Activated B cell treated with CpG ODN at 0.5 μM for 24 hours (primary cell): ENCODE measurements at regions of chr9 and their contacts with region 1.

Region 1: DNA sequence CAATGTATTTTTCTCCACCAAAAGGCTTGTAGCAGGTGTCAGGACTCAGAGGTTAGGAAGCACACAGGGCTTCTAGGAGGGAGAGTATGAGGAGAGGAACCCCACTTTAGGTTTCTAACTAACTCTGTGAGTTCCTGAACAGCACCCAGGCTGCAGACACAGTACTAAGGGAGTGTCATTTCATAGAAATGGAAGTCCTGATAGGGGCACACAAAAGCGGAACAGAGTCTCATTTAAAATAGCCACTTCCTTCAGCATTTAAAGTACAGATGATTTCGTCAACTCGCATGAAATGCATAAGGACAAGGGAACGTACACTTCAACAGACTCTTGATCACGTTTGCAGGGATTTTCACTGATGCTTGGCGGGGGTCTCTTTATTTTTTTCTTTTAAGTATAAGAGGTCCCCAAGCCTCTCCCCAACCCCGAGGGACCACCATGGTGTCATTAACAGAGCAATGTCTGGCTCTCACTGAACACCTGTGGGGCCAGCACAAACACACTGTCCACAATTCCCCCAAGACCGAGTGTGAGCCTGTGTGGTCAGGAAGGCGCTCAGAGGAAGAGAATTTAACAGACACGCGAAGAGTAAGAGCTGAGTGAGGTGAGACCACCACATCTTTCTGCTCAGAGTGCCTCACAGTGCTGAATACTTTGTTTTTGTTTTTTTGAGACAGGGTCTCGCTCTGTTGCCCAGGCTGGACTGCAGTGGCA is 82.3 kb downstream of the SECISBP2 start:
- DNase-seq: peak; percentile 35
- ATAC-seq: peak; percentile 83
- H3K4me3 Mint-ChIP-seq: peak overlapping the region; percentile 68
- H3K27ac Mint-ChIP-seq: peak overlapping the region; percentile 90
- H3K4me1 Mint-ChIP-seq: peaks cover 62% of the 10 kb centered on the region
- H3K27me3 Mint-ChIP-seq: no peaks in the 10 kb centered on the region
- CTCF ChIP-seq: no peak

Region 2: GRCh38 chr9:88733651-88734421 is 666.7 kb before region 1 on chr9:
- CTCF ChIA-PET with region 1: no interaction called
- POLR2A ChIA-PET with region 1: no interaction called
- intact Hi-C with region 1: no loop called
- DNase-seq: no peak
- ATAC-seq: no peak
- H3K4me3 Mint-ChIP-seq: no peak overlapping the region
- H3K27ac Mint-ChIP-seq: no peak overlapping the region
- H3K4me1 Mint-ChIP-seq: no peaks in the 10 kb centered on the region
- H3K27me3 Mint-ChIP-seq: peaks cover 3% of the 10 kb centered on the region
- CTCF ChIP-seq: no peak

Region 3: DNA sequence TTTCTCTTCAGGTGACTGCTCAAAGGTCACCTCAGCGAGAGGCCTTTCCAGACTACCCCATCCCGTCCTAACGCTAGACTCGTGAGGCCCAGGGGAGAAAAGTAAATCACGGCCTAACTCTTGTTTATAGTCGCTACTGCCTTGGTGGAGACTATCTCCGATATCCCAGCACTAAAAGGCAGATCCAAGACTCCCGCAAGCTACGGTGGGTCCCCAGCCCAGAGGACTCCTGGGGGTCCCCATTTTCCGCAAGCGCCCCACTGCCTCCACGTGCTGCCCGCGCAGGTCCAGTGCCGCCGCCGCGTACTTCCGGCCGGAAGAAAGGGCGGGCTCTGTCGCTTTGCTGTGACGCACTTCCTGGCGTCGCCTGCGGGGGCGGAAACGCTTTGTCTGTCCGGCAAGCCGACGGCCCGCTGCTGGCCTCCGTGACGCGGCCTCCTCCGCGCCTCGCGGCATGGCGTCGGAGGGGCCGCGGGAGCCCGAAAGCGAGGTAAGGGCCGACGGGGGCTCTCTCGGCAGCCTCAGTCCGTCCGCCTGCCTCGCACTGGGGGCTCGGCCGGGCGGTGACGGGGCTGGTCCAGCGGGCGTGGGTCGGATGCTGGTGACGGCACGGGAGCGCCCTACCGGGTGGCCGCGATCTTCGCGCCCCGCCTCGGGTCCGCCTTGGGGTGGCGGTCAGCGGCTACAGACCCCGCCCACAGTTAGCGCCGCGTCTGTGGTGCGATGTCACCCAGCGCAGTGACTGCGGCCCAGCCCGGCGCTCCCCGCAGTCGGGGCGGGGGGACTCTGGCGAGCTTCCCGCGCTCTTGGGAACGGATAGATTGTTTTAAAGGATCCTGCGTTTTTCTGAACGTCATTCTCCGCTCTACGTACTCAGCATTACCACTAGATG is 82.2 kb before region 1 on chr9 and contains the start of gene SECISBP2:
- CTCF ChIA-PET with region 1: no interaction called
- POLR2A ChIA-PET with region 1: no interaction called
- intact Hi-C with region 1: loop called (anchors 1 kb)
- DNase-seq: peak; percentile 98
- ATAC-seq: peak; percentile 92
- H3K4me3 Mint-ChIP-seq: peak within 1 kb of the TSS; percentile 91
- H3K27ac Mint-ChIP-seq: peak within 1 kb of the TSS; percentile 98
- H3K4me1 Mint-ChIP-seq: peaks cover 62% of the 10 kb centered on the region
- H3K27me3 Mint-ChIP-seq: no peaks in the 10 kb centered on the region
- CTCF ChIP-seq: no peak
- total RNA-seq, gene SECISBP2: 81.5 and 97.1 TPM in 2 replicates

Region 4: DNA sequence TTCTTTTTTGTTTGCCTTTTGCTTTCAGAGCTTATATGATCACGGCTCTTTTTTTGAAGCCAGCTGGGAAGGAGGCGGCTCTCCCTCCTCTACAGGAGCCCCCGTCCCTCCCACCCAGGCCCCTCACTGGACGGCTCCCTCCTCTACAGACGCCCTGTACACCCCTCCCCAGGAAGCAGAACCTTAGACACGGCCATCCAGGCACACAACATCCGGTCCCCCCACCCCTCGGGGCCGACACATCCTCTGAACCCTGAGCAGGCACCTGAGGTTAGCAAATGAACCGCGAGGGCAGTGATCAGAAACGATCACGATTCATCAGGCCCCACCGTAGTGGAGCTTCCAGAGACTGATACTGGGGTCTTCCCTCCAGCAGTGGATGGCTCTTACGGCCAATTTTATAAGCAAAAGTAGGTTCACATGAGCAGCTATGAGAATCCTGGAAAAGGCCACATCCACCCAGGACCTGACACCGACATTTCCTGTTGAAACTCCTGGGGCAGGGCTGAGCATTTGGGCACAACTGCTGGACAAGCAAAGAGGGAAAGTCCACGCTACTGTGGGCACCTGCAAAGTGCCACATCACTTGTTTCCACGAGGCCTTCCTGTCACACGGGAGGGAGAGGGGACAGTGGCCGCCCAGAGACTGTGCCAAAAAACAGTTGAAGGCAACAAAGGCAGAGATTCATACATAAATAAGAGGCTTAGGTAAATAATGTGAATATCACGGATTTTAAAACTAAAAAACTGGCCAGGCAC is 18.5 kb after region 1 on chr9:
- CTCF ChIA-PET with region 1: interaction called, 3 read pairs
- POLR2A ChIA-PET with region 1: interaction called, 10 read pairs
- intact Hi-C with region 1: loop called (anchors 1 kb)
- DNase-seq: peak; percentile 53
- ATAC-seq: peak; percentile 83
- H3K4me3 Mint-ChIP-seq: peak overlapping the region; percentile 84
- H3K27ac Mint-ChIP-seq: peak overlapping the region; percentile 94
- H3K4me1 Mint-ChIP-seq: peaks cover 73% of the 10 kb centered on the region
- H3K27me3 Mint-ChIP-seq: no peaks in the 10 kb centered on the region
- CTCF ChIP-seq: no peak

Region 5: GRCh38 chr9:89497978-89498851 is 97.7 kb after region 1 on chr9 and contains the start of gene SEMA4D:
- CTCF ChIA-PET with region 1: no interaction called
- POLR2A ChIA-PET with region 1: interaction called, 5 read pairs
- intact Hi-C with region 1: loop called (anchors 2 kb)
- DNase-seq: peak; percentile 29
- ATAC-seq: peak; percentile 49
- H3K4me3 Mint-ChIP-seq: peak within 1 kb of the TSS; percentile 92
- H3K27ac Mint-ChIP-seq: peak within 1 kb of the TSS; percentile 91
- H3K4me1 Mint-ChIP-seq: peaks cover 79% of the 10 kb centered on the region
- H3K27me3 Mint-ChIP-seq: no peaks in the 10 kb centered on the region
- CTCF ChIP-seq: no peak
- total RNA-seq, gene SEMA4D: 68.0 and 79.7 TPM in 2 replicates

Region 6: DNA sequence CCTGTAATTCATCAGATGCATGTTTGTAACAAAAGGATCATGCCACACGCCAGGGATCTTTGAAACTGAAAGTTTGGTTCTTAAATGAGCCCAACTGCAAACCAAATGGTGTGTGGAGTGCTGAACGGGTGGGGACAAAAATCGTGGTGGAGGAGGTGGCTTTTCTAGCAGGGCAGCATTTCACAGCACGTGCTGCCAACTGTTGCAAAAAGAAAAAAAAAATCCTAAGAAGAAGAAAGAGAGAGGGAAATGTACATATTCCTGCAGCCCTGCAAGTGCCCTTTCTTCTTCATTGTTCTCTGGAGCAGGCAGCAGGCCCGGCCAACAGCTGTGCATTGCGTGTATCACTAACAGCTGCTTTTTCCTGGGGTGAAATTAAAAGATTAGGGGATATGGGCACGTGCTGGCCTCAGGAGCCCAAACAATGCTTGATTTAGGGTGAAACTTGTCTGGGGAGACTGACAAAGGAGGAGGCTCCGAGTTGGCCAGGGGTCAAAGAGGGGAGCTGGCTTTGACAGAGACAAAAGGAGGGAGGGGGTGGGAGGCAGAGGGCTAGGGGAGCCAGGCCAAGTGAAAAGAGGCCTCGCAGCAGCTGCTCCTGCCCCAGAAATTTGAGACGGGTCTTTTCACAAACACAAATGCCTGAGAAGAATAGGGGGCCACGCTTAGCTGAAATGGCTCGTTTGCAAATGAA is 277.3 kb after region 1 on chr9:
- CTCF ChIA-PET with region 1: no interaction called
- POLR2A ChIA-PET with region 1: no interaction called
- intact Hi-C with region 1: no loop called
- DNase-seq: no peak
- ATAC-seq: no peak
- H3K4me3 Mint-ChIP-seq: no peak overlapping the region
- H3K27ac Mint-ChIP-seq: no peak overlapping the region
- H3K4me1 Mint-ChIP-seq: peaks cover 4% of the 10 kb centered on the region
- H3K27me3 Mint-ChIP-seq: no peaks in the 10 kb centered on the region
- CTCF ChIP-seq: no peak

Region 7: GRCh38 chr9:91197232-91198181 is 1796.9 kb after region 1 on chr9:
- CTCF ChIA-PET with region 1: no interaction called
- POLR2A ChIA-PET with region 1: no interaction called
- intact Hi-C with region 1: no loop called
- DNase-seq: no peak
- ATAC-seq: no peak
- H3K4me3 Mint-ChIP-seq: no peak overlapping the region
- H3K27ac Mint-ChIP-seq: no peak overlapping the region
- H3K4me1 Mint-ChIP-seq: peaks cover 24% of the 10 kb centered on the region
- H3K27me3 Mint-ChIP-seq: no peaks in the 10 kb centered on the region
- CTCF ChIP-seq: no peak